Stomach (tissue), 19 donors: ENCODE measurements at regions of chr13 and their contacts with region 1.

Region 1: DNA sequence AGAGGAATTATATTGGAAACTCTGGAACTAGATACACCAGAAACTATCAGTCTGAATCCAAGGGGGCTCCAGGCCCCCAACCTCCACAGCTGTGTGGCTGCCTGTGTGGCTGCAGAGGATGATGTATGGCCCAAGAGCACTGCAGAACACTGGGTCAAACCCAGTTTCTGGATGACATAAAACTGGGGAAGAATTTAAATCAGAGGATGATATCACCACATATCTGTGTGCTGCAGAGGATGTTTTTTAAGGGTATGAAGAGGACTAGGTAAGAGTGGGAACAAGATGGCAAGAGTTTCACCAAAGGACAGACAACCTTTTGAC is 226.4 kb downstream of the SUCLA2 start:
- DNase-seq: no peak
- H3K4me3 ChIP-seq: no peak overlapping the region
- H3K27ac ChIP-seq: no peak overlapping the region
- H3K4me1 ChIP-seq: peaks cover 0 to 6% (median 2%) of the 10 kb centered on the region in 4 donors
- H3K27me3 ChIP-seq: no peaks in the 10 kb centered on the region
- CTCF ChIP-seq: no peak
- EP300 ChIP-seq: no peak
- POLR2A ChIP-seq: no peak

Region 2: GRCh38 chr13:46743191-46743590 is 1031.4 kb before region 1 on chr13:
- intact Hi-C with region 1: no loop called
- DNase-seq: no peak
- H3K4me3 ChIP-seq: no peak overlapping the region
- H3K27ac ChIP-seq: no peak overlapping the region
- H3K4me1 ChIP-seq: no peaks in the 10 kb centered on the region
- H3K27me3 ChIP-seq: no peaks in the 10 kb centered on the region
- CTCF ChIP-seq: no peak
- EP300 ChIP-seq: no peak
- POLR2A ChIP-seq: no peak

Region 3: GRCh38 chr13:46831588-46832194 is 942.9 kb before region 1 on chr13:
- intact Hi-C with region 1: loop called (anchors 10 kb)
- DNase-seq: peak in 1 of 2 donors; percentile 74
- H3K4me3 ChIP-seq: no peak overlapping the region
- H3K27ac ChIP-seq: no peak overlapping the region
- H3K4me1 ChIP-seq: no peaks in the 10 kb centered on the region
- H3K27me3 ChIP-seq: no peaks in the 10 kb centered on the region
- CTCF ChIP-seq: peak in 4 of 7 experiments; percentile 47 to 69 (median 63)
- EP300 ChIP-seq: no peak
- POLR2A ChIP-seq: no peak

Region 4: GRCh38 chr13:46975173-46975572 is 799.5 kb before region 1 on chr13:
- intact Hi-C with region 1: loop called (anchors 10 kb)
- DNase-seq: no peak
- H3K4me3 ChIP-seq: no peak overlapping the region
- H3K27ac ChIP-seq: no peak overlapping the region
- H3K4me1 ChIP-seq: no peaks in the 10 kb centered on the region
- H3K27me3 ChIP-seq: no peaks in the 10 kb centered on the region
- CTCF ChIP-seq: no peak
- EP300 ChIP-seq: no peak
- POLR2A ChIP-seq: no peak

Region 5: DNA sequence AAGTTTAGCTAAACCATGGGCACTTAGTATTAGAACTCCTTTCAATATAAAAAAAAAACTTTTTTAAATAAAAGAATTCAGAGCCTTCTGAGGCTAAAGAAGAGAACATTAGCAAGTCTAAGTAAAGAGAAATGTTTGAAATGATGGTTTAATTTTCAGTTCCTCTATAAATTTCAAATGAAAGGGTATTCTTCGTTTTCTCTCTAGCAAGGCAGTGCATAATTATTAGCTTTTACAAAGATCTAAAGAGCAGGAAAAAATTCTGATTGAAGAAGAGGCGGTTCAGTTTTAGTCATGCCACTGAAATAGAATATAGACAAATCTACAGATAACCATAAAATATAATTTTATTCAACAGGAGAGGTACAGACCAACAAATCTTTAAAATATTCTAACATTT is 208.4 kb after region 1 on chr13:
- intact Hi-C with region 1: no loop called
- DNase-seq: no peak
- H3K4me3 ChIP-seq: no peak overlapping the region
- H3K27ac ChIP-seq: no peak overlapping the region
- H3K4me1 ChIP-seq: no peaks in the 10 kb centered on the region
- H3K27me3 ChIP-seq: no peaks in the 10 kb centered on the region
- CTCF ChIP-seq: no peak
- EP300 ChIP-seq: no peak
- POLR2A ChIP-seq: no peak

Region 6: DNA sequence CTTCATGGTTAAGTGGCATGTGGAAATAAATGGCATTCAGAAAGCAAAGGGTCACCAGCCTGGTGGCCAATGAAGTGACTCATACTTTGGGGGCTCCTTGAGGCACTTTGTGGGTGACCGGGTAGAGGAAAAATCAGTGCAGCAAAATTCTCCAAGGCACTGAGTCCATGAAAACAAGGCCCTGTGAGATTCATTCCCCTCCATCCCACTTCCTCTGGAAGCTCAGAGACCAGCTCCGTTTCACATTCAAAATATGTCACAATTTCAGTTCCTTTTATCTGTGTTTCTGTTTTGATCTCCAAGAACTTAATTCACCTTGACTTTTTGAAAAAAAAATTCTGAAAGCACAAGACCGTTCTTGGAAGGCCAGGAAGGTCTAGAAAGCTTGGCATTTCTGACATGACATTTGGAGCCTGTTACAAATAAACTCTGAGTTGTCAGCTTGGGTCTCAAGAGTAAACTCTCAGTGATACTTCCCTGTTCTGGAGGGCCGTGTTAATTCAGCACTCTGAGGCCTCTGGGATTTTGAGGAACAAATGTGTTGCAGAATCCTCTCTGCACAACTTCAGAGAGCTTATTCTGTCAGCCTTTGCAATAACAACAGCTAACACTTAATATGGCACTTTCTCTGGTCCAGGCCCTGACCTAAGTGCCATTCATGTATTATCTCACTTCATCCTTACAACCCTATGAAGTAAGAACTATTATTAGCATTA is 885.9 kb after region 1 on chr13:
- intact Hi-C with region 1: no loop called
- DNase-seq: peak in 1 of 2 donors; percentile 49
- H3K4me3 ChIP-seq: no peak overlapping the region
- H3K27ac ChIP-seq: peak overlapping the region in 4 of 5 donors; percentile 1 to 60 (median 43)
- H3K4me1 ChIP-seq: peaks cover 0 to 16% (median 7%) of the 10 kb centered on the region in 4 donors
- H3K27me3 ChIP-seq: no peaks in the 10 kb centered on the region
- CTCF ChIP-seq: no peak
- EP300 ChIP-seq: no peak
- POLR2A ChIP-seq: no peak